ENCODE measurements at regions of chr17 and their contacts with region 1.

Region 1: DNA sequence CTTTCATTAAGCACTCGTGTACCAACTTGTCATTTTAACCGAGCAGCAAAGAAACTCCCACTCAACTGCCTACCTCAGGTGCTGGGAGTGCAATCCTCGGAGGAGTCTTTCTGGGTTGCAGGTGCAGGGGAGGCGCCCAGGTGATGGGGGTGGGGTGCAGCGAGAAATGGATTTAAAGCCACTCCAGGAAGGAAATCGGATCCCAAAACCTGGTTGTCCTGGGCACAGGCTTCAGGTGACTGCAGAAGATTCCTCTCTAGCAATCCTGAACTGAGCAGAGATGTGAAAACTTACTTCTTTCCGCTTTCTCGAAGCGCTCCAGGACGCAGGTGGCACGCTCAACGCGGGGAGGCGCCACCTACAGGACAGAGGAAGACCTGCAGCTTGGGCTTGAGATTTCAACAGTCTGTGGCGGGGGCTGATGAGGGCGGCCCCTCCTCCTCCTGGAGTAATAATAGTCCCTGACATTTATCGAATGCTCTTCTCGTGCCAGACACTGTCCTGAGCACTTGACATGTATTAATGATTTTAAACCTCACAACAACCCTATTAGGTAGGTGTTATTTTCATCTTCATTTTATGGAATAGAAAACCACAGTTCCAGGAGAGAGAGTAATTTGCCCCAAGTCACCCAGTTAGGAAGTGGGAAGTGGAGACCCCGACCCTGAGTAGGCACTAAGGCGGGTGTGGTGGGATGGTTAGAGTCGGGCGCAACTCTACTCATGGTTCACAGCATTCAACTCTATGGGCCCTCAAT is 27.2 kb upstream of the SKAP1 start:
- DNase-seq: peak; percentile 86
- ATAC-seq: peak; percentile 72
- H3K4me3 Mint-ChIP-seq: peak overlapping the region; percentile 57
- H3K27ac Mint-ChIP-seq: peak overlapping the region; percentile 41
- H3K4me1 Mint-ChIP-seq: peaks cover 57% of the 10 kb centered on the region
- H3K27me3 Mint-ChIP-seq: no peaks in the 10 kb centered on the region

Region 2: GRCh38 chr17:48107168-48108132 is 349.8 kb before region 1 on chr17 and contains the start of gene SNX11:
- CTCF ChIA-PET with region 1: no interaction called
- POLR2A ChIA-PET with region 1: no interaction called
- intact Hi-C with region 1: loop called in 1 of 2 experiments (anchors 10 kb)
- DNase-seq: peak; percentile 97
- ATAC-seq: peak; percentile 87
- H3K4me3 Mint-ChIP-seq: peak within 1 kb of the TSS; percentile 97
- H3K27ac Mint-ChIP-seq: peak within 1 kb of the TSS; percentile 98
- H3K4me1 Mint-ChIP-seq: peaks cover 61% of the 10 kb centered on the region
- H3K27me3 Mint-ChIP-seq: no peaks in the 10 kb centered on the region
- total RNA-seq, gene SNX11: 18.0 to 21.4 TPM

Region 3: GRCh38 chr17:48351831-48352332 is 105.4 kb before region 1 on chr17:
- CTCF ChIA-PET with region 1: interaction called, 21 read pairs
- POLR2A ChIA-PET with region 1: no interaction called
- intact Hi-C with region 1: loop called (anchors 1 kb)
- DNase-seq: no peak
- ATAC-seq: no peak
- H3K4me3 Mint-ChIP-seq: no peak overlapping the region
- H3K27ac Mint-ChIP-seq: no peak overlapping the region
- H3K4me1 Mint-ChIP-seq: peaks cover 11% of the 10 kb centered on the region
- H3K27me3 Mint-ChIP-seq: no peaks in the 10 kb centered on the region

Region 4: GRCh38 chr17:48413613-48414405 is 43.4 kb before region 1 on chr17:
- CTCF ChIA-PET with region 1: interaction called, 13 read pairs
- POLR2A ChIA-PET with region 1: no interaction called
- intact Hi-C with region 1: loop called (anchors 1 to 2 kb)
- DNase-seq: no peak
- ATAC-seq: peak; percentile 43
- H3K4me3 Mint-ChIP-seq: peak overlapping the region; percentile 10
- H3K27ac Mint-ChIP-seq: peak overlapping the region; percentile 95
- H3K4me1 Mint-ChIP-seq: peaks cover 93% of the 10 kb centered on the region
- H3K27me3 Mint-ChIP-seq: no peaks in the 10 kb centered on the region

Region 5: GRCh38 chr17:48441231-48441711 is 16.0 kb before region 1 on chr17:
- CTCF ChIA-PET with region 1: interaction called, 27 read pairs
- POLR2A ChIA-PET with region 1: interaction called, 4 read pairs
- intact Hi-C with region 1: loop called in 1 of 2 experiments (anchors 1 kb)
- DNase-seq: peak; percentile 35
- ATAC-seq: peak; percentile 55
- H3K4me3 Mint-ChIP-seq: peak overlapping the region; percentile 31
- H3K27ac Mint-ChIP-seq: peak overlapping the region; percentile 91
- H3K4me1 Mint-ChIP-seq: peaks cover 95% of the 10 kb centered on the region
- H3K27me3 Mint-ChIP-seq: no peaks in the 10 kb centered on the region

Measured in activated CD4-positive, alpha-beta T cell treated with anti-CD3 and anti-CD28 coated beads for 36 hours (primary cell).